Motor neuron (in vitro differentiated cells): ENCODE measurements at regions of chr20 and their contacts with region 1.

Region 1: GRCh38 chr20:3312940-3313682 is 74.1 kb upstream of the SLC4A11 start:
- ATAC-seq: peak in 3 of 8 experiments; percentile 88 to 91 (median 88)
- H3K4me3 ChIP-seq: no peak overlapping the region
- H3K27ac ChIP-seq: no peak overlapping the region
- H3K4me1 ChIP-seq: peaks cover 0 to 10% of the 10 kb centered on the region in 2 donors

Region 2: GRCh38 chr20:3068986-3069900 is 243.9 kb before region 1 on chr20:
- in situ Hi-C with region 1: loop called in 1 of 9 experiments (anchors 25 kb)
- ATAC-seq: peak in 1 of 8 experiments; percentile 4
- H3K4me3 ChIP-seq: no peak overlapping the region
- H3K27ac ChIP-seq: no peak overlapping the region
- H3K4me1 ChIP-seq: no peaks in the 10 kb centered on the region

Region 3: GRCh38 chr20:3204124-3204822 is 108.8 kb before region 1 on chr20 and contains the start of gene DDRGK1:
- in situ Hi-C with region 1: loop called in 1 of 9 experiments (anchors 25 kb)
- ATAC-seq: peak; percentile 67 to 92 (median 88)
- H3K4me3 ChIP-seq: peak within 1 kb of the TSS; percentile 60 to 89 (median 77)
- H3K27ac ChIP-seq: peak within 1 kb of the TSS; percentile 90 to 94
- H3K4me1 ChIP-seq: peaks cover 9 to 12% of the 10 kb centered on the region in 2 donors
- total RNA-seq, gene DDRGK1: 44.9 to 71.8 (median 53.6) TPM

Region 4: DNA sequence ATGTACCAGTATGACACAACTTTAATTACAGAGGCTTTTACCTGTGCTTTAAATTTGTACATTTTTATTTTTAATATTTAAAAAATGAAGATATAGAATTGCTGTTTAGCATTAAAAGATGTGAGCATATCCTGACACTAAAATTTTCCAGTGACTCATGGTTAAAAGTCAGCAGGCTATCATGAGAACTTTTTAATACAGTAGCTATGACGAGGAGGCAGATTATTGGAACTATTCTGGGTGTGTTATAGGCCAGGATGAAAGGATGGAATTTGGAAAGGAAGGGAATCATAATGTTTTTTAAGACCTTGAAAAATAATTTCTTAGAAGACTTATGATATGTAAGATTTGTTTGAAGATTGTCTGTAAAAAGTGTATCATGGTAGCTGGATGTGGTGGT is 259.0 kb after region 1 on chr20:
- in situ Hi-C with region 1: no loop called
- ATAC-seq: no peak
- H3K4me3 ChIP-seq: no peak overlapping the region
- H3K27ac ChIP-seq: no peak overlapping the region
- H3K4me1 ChIP-seq: no peaks in the 10 kb centered on the region